ENCODE measurements at regions of chr11 and their contacts with region 1.

Region 1: DNA sequence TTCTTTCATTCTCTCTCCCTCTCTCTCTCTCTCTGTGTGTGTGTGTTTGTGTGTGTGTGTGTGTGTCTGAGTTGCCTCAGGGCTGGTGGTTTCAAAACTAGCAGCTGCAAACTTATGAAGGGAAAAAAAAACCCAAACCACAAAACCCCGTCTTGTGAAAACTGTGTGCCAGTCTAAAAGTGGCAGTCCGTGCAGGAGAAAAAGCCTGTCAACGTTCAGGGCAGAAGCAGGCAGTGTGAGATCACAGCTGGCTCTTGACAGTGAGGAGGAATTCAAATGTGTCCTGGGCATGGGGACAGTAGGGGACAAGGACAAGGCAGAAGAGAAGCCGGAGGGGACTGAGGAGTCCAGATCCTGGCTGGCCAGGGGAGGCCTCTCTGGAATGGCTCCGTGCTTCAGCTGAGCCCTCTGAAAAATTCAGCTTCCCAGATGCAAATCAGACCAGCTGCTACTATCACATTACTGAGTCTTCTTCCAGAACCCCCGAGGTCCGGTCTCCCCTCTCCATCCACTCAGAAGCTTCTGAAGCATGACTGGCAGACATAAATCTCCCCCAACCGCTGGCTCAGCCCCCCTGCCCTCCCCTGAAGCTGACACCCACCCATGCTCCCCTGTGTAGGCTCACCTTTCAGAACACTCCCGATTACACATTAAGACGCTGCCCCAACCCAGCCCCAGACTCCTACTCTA is 31.9 kb downstream of the FLI1 start:
- DNase-seq: peak; percentile 90
- ATAC-seq: peak; percentile 67
- H3K4me3 ChIP-seq: peak overlapping the region; percentile 27 to 57 (median 43)
- H3K4me3 Mint-ChIP-seq: peak overlapping the region; percentile 93
- H3K27ac ChIP-seq: peak overlapping the region; percentile 70 to 88
- H3K27ac Mint-ChIP-seq: peak overlapping the region; percentile 92
- H3K4me1 ChIP-seq: peaks cover 98 to 100% of the 10 kb centered on the region in 2 donors
- H3K4me1 Mint-ChIP-seq: peaks cover 96% of the 10 kb centered on the region
- H3K27me3 ChIP-seq: no peaks in the 10 kb centered on the region
- H3K27me3 Mint-ChIP-seq: no peaks in the 10 kb centered on the region
- CTCF ChIP-seq: no peak

Region 2: DNA sequence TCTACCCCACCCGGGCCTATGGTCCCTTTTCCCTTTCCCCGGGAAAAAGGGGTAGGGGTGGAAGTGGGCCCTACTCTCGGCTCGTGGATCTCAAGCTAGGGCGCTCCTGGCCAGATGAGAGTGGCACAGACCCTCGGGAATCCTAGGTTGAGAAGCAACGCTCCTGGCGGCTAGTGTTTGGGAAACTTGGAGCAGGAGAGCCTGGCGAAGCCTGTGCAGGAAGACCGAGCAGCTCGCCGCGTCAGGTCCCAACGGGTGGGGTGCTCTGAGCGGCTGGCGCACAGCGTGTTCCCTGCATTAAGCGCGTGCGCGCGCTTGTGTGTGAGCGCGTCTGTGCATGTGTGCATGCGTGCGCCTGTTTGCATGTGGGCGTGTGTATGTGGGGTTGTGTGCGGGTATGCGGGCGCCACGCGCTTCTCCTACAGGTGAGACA is 39.0 kb before region 1 on chr11:
- CTCF ChIA-PET with region 1: interaction called, 4 read pairs
- POLR2A ChIA-PET with region 1: interaction called, 16 read pairs
- intact Hi-C with region 1: no loop called
- DNase-seq: peak; percentile 71
- ATAC-seq: peak; percentile 72
- H3K4me3 ChIP-seq: peak overlapping the region; percentile 9 to 79 (median 55)
- H3K4me3 Mint-ChIP-seq: peak overlapping the region; percentile 96
- H3K27ac ChIP-seq: no peak overlapping the region
- H3K27ac Mint-ChIP-seq: peak overlapping the region; percentile 32
- H3K4me1 ChIP-seq: peaks cover 36 to 37% of the 10 kb centered on the region in 2 donors
- H3K4me1 Mint-ChIP-seq: peaks cover 48% of the 10 kb centered on the region
- H3K27me3 ChIP-seq: peaks cover 0 to 43% (median 21%) of the 10 kb centered on the region in 4 experiments
- H3K27me3 Mint-ChIP-seq: peaks cover 38% of the 10 kb centered on the region
- CTCF ChIP-seq: no peak

Measured in B cell (primary cell).